Heart left ventricle (tissue), 16 donors: ENCODE measurements at regions of chr22 and their contacts with region 1.

Region 1: DNA sequence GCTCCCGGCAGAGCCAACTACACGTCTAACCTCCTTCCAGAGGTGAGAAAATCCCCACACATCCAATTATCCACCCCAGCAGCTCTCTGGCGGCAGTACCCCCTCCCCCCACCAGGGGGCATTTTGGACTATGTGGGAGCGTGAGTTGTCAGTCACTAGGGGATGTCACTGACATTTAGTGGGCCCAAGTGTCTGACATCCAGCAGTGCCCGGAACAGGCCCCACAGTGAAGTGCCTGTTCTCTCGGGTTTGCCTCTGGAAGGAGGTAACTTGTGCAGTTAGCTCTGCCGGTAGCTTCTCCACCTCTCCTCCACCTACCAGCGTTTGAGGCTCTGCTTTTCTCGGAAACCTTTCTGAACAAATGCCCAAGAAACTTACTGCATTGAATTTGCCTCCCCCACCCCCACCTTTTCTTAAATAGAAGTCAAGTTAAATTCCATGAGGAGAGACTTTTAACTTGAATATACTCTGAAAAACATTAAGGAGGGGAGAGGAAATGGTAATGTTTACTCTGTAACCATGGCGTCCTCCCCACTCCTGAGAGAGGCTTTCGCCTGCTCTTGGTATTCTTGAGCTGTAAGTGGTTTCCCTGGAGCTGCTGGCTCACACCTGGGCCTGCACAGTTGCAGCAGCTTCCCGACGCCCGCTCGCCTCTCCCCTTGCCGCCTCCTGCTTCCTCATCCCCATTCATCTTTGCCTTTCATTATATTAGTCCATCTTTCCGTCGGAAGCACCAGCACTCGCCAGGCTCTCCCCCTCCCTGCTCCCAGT is 112.8 kb downstream of the WNT7B start:
- DNase-seq: peak; percentile 52 to 83 (median 64)
- ATAC-seq: peak; percentile 57 to 78 (median 73)
- H3K4me3 ChIP-seq: no peak overlapping the region
- H3K27ac ChIP-seq: no peak overlapping the region
- H3K4me1 ChIP-seq: peaks cover 4 to 27% (median 13%) of the 10 kb centered on the region in 12 donors
- H3K27me3 ChIP-seq: peaks cover 15 to 46% (median 27%) of the 10 kb centered on the region in 9 donors
- CTCF ChIP-seq: peak; percentile 82 to 94 (median 90)
- POLR2A ChIP-seq: no peak

Region 2: GRCh38 chr22:45397806-45398205 is 466.4 kb before region 1 on chr22:
- intact Hi-C with region 1: no loop called
- DNase-seq: no peak
- ATAC-seq: no peak
- H3K4me3 ChIP-seq: no peak overlapping the region
- H3K27ac ChIP-seq: no peak overlapping the region
- H3K4me1 ChIP-seq: no peaks in the 10 kb centered on the region
- H3K27me3 ChIP-seq: peaks cover 0 to 4% (median 0%) of the 10 kb centered on the region in 9 donors
- CTCF ChIP-seq: peak in 3 of 12 donors; percentile 6 to 31 (median 28)
- POLR2A ChIP-seq: no peak

Region 3: GRCh38 chr22:45577746-45578523 is 286.2 kb before region 1 on chr22:
- intact Hi-C with region 1: loop called in 7 of 10 experiments (anchors 5 to 10 kb)
- DNase-seq: peak; percentile 72 to 89 (median 82)
- ATAC-seq: peak; percentile 47 to 81 (median 75)
- H3K4me3 ChIP-seq: no peak overlapping the region
- H3K27ac ChIP-seq: no peak overlapping the region
- H3K4me1 ChIP-seq: peaks cover 0 to 5% (median 0%) of the 10 kb centered on the region in 12 donors
- H3K27me3 ChIP-seq: peaks cover 0 to 18% (median 8%) of the 10 kb centered on the region in 9 donors
- CTCF ChIP-seq: peak; percentile 85 to 95 (median 90)
- POLR2A ChIP-seq: no peak

Region 4: GRCh38 chr22:45584121-45584570 is 280.0 kb before region 1 on chr22:
- intact Hi-C with region 1: loop called in 7 of 10 experiments (anchors 5 to 10 kb)
- DNase-seq: no peak
- ATAC-seq: peak in 1 of 4 donors; percentile 22
- H3K4me3 ChIP-seq: no peak overlapping the region
- H3K27ac ChIP-seq: no peak overlapping the region
- H3K4me1 ChIP-seq: peaks cover 0 to 13% (median 0%) of the 10 kb centered on the region in 12 donors
- H3K27me3 ChIP-seq: peaks cover 0 to 6% (median 0%) of the 10 kb centered on the region in 9 donors
- CTCF ChIP-seq: no peak
- POLR2A ChIP-seq: no peak

Region 5: GRCh38 chr22:45934659-45935341 is 70.6 kb after region 1 on chr22:
- intact Hi-C with region 1: no loop called
- DNase-seq: peak in 1 of 5 donors; percentile 32
- ATAC-seq: peak in 2 of 4 donors; percentile 36 to 38
- H3K4me3 ChIP-seq: no peak overlapping the region
- H3K27ac ChIP-seq: no peak overlapping the region
- H3K4me1 ChIP-seq: peaks cover 0 to 7% (median 0%) of the 10 kb centered on the region in 12 donors
- H3K27me3 ChIP-seq: peaks cover 11 to 63% (median 25%) of the 10 kb centered on the region in 9 donors
- CTCF ChIP-seq: no peak
- POLR2A ChIP-seq: no peak